Activated T-helper 1 cell treated with anti-CD3 and anti-CD28 coated beads, Interleukin-12 subunit alpha, Interleukin-12 subunit beta, Interleukin-2, Interleukin-4 antibody, amounts not matched to agents 30 ng/mL and 10 ng/mL and 1 ng/mL, durations not matched to agents 14 hours and 24 hours and 36 hours (primary cell): ENCODE measurements at regions of chr6 and their contacts with region 1.

Region 1: GRCh38 chr6:4210629-4211423 is 75.5 kb upstream of the ECI2 start:
- DNase-seq: peak; percentile 27
- H3K4me3 Mint-ChIP-seq: no peak overlapping the region
- H3K27ac Mint-ChIP-seq: no peak overlapping the region
- H3K4me1 Mint-ChIP-seq: peaks cover 20% of the 10 kb centered on the region
- H3K27me3 Mint-ChIP-seq: no peaks in the 10 kb centered on the region

Region 2: DNA sequence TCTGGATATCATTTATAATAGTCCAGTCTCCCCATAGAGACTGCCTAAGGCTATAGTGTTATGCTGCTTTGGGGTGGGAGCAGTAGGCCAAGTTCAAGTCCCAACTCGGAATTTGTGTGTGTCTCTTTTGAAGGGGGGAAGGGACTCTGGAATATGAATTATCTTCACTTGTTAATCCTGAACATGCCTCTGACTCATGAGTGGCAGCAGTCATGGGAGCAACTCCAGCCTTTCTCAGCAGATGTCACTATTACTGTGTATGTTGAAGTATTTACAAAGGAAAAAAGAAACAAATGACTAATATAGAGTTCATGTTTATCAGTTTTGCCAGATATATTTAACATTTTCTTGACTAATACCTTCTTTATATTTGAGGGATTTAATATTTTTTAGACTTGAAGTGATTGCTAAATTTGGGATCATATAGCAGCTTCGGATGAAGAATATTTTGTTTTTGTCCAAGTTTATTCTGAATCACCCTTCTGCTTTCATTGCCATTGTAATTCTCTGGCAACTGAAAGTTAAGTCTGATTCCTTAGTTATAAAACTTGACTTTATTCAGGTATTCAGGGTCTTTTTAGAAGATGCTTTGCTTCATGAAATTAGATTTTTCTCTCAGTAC is 155.3 kb before region 1 on chr6:
- intact Hi-C with region 1: loop called (anchors 1 kb)
- DNase-seq: no peak
- H3K4me3 Mint-ChIP-seq: no peak overlapping the region
- H3K27ac Mint-ChIP-seq: no peak overlapping the region
- H3K4me1 Mint-ChIP-seq: peaks cover 41% of the 10 kb centered on the region
- H3K27me3 Mint-ChIP-seq: no peaks in the 10 kb centered on the region

Region 3: DNA sequence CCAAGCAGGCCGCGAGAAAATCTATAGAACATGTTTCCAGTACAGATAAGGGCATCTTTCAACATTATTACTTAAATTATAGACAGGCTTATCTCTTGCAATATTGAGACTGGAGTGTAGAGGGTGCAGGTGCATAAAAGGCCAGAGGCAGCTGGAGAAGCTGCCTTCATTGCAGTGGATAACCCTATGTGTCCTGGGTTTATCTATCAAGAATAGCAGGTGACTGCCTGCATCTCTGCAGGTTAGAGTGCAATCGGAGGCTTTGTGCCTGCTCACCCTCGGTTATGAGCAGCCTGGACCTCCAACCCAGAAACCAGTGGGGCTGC is 46.7 kb before region 1 on chr6:
- intact Hi-C with region 1: loop called (anchors 1 kb)
- DNase-seq: no peak
- H3K4me3 Mint-ChIP-seq: no peak overlapping the region
- H3K27ac Mint-ChIP-seq: no peak overlapping the region
- H3K4me1 Mint-ChIP-seq: no peaks in the 10 kb centered on the region
- H3K27me3 Mint-ChIP-seq: peaks cover 2% of the 10 kb centered on the region